B cell (primary cell): ENCODE measurements at regions of chr7 and their contacts with region 1.

Region 1: DNA sequence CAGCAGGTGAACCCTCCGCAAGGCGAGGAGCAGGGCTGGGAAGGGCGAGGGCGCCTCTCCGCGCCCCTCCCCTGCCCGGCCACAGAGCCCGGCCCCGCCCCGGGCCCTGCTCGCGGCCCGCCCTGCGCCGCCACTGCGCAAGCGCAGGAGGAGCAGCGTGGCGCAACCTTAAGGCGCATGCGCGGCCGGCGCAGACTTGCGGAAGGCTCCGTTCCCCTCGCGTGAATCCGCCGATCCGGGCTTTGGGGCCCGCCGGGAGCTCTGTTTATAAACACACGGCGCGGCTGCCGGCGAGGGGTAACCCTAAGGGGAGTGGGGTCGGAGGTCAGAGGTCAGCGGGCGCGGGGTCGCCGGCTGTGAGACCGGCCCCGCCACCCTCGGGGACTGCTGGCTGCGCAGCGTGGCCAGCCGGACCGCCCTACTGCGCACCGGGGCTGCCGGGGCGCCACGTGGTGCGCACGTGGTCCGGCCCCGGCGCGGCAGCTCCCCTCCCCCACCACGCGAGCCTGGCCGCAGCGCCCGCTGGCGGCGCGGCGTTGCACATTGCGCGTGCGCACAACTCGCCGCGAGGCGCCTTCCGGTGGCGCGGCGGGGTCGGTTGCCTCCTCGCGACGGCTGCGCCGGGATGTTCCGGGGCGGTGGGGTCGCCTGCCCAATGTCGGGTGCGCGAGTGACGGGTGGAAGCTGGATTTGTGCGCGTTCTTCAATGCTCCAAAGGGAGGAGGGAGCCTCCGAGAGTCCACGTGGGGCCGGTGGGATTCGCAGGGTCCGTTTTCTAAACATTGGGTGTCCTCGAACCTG is 40.2 kb upstream of the FOXK1 start:
- DNase-seq: peak; percentile 99
- ATAC-seq: peak; percentile 82
- H3K4me3 ChIP-seq: peak overlapping the region; percentile 57 to 83 (median 79)
- H3K4me3 Mint-ChIP-seq: peak overlapping the region; percentile 88
- H3K27ac ChIP-seq: peak overlapping the region; percentile 83 to 90
- H3K27ac Mint-ChIP-seq: peak overlapping the region; percentile 87
- H3K4me1 ChIP-seq: peaks cover 5 to 13% of the 10 kb centered on the region in 2 donors
- H3K4me1 Mint-ChIP-seq: peaks cover 11% of the 10 kb centered on the region
- H3K27me3 ChIP-seq: peaks cover 0 to 5% (median 0%) of the 10 kb centered on the region in 4 experiments
- H3K27me3 Mint-ChIP-seq: no peaks in the 10 kb centered on the region
- CTCF ChIP-seq: peak; percentile 44

Region 2: GRCh38 chr7:4610768-4611467 is 30.9 kb before region 1 on chr7:
- CTCF ChIA-PET with region 1: interaction called, 3 read pairs
- POLR2A ChIA-PET with region 1: no interaction called
- intact Hi-C with region 1: loop called (anchors 1 kb)
- DNase-seq: peak; percentile 75
- ATAC-seq: peak; percentile 83
- H3K4me3 ChIP-seq: no peak overlapping the region
- H3K4me3 Mint-ChIP-seq: no peak overlapping the region
- H3K27ac ChIP-seq: no peak overlapping the region
- H3K27ac Mint-ChIP-seq: no peak overlapping the region
- H3K4me1 ChIP-seq: peaks cover 10 to 13% of the 10 kb centered on the region in 2 donors
- H3K4me1 Mint-ChIP-seq: peaks cover 12% of the 10 kb centered on the region
- H3K27me3 ChIP-seq: peaks cover 0 to 3% (median 0%) of the 10 kb centered on the region in 4 experiments
- H3K27me3 Mint-ChIP-seq: peaks cover 26% of the 10 kb centered on the region
- CTCF ChIP-seq: peak; percentile 90

Region 3: DNA sequence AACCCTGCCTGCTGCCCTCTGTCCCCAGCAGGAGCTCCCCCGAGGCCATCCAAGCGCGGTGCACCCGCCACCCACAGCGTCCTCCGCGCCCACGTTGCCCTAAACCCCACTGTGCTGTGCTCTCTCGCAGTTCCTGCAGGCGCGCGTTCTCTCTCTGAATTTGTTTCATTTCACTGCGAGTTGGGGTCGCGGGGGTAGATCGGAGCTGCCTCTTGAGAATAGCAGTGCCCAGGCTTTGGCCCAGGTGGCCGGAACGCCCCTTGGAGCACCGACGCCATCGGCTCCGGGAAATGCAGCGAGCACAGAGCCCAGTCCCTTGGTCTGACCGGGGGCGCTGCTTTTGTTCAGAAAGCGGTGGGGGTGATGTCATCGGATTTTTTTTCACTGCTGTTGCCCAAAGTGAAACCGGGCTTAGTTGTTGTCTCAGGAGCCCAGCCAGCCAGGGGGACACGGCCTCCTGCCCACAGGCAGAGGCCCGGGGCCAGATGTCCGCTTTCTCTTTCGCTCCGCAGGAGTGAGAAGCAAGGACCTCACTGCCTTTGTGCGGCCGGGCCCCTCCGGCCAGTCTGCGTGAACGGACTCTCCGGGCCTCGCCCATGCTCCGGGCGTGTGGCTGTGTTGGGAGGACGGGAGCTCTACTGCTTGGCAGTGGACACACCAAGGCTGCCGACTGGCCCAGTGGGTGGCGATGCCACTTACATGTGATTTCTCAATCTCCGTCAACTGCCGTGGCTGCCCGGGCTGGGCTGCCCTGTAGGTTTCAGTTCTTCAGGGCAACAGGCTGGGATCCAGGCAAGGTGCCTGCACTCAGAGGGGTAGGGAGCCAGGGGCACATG is 83.4 kb after region 1 on chr7:
- CTCF ChIA-PET with region 1: interaction called, 3 read pairs
- POLR2A ChIA-PET with region 1: no interaction called
- intact Hi-C with region 1: loop called (anchors 1 kb)
- DNase-seq: peak; percentile 74
- ATAC-seq: peak; percentile 78
- H3K4me3 ChIP-seq: peak overlapping the region; percentile 32 to 84 (median 63)
- H3K4me3 Mint-ChIP-seq: peak overlapping the region; percentile 95
- H3K27ac ChIP-seq: peak overlapping the region; percentile 80 to 89
- H3K27ac Mint-ChIP-seq: peak overlapping the region; percentile 92
- H3K4me1 ChIP-seq: peaks cover 13 to 28% of the 10 kb centered on the region in 2 donors
- H3K4me1 Mint-ChIP-seq: peaks cover 45% of the 10 kb centered on the region
- H3K27me3 ChIP-seq: no peaks in the 10 kb centered on the region
- H3K27me3 Mint-ChIP-seq: no peaks in the 10 kb centered on the region
- CTCF ChIP-seq: no peak

Region 4: GRCh38 chr7:4775250-4775847 is 133.5 kb after region 1 on chr7 and contains the start of gene AP5Z1:
- CTCF ChIA-PET with region 1: interaction called, 7 read pairs
- POLR2A ChIA-PET with region 1: interaction called, 25 read pairs
- intact Hi-C with region 1: no loop called
- DNase-seq: peak; percentile 98
- ATAC-seq: peak; percentile 93
- H3K4me3 ChIP-seq: peak within 1 kb of the TSS; percentile 87 to 97 (median 95)
- H3K4me3 Mint-ChIP-seq: peak within 1 kb of the TSS; percentile 97
- H3K27ac ChIP-seq: peak within 1 kb of the TSS; percentile 94 to 95
- H3K27ac Mint-ChIP-seq: peak within 1 kb of the TSS; percentile 99
- H3K4me1 ChIP-seq: peaks cover 14 to 26% of the 10 kb centered on the region in 2 donors
- H3K4me1 Mint-ChIP-seq: peaks cover 39% of the 10 kb centered on the region
- H3K27me3 ChIP-seq: no peaks in the 10 kb centered on the region
- H3K27me3 Mint-ChIP-seq: no peaks in the 10 kb centered on the region
- CTCF ChIP-seq: no peak
- total RNA-seq, gene AP5Z1: 108 and 113 TPM in 2 replicates

Region 5: GRCh38 chr7:6505685-6506574 is 1864.1 kb after region 1 on chr7:
- CTCF ChIA-PET with region 1: no interaction called
- POLR2A ChIA-PET with region 1: interaction called, 17 read pairs
- intact Hi-C with region 1: no loop called
- DNase-seq: no peak
- ATAC-seq: no peak
- H3K4me3 ChIP-seq: no peak overlapping the region
- H3K4me3 Mint-ChIP-seq: peak overlapping the region; percentile 98
- H3K27ac ChIP-seq: no peak overlapping the region
- H3K27ac Mint-ChIP-seq: no peak overlapping the region
- H3K4me1 ChIP-seq: peaks cover 7 to 13% of the 10 kb centered on the region in 2 donors
- H3K4me1 Mint-ChIP-seq: peaks cover 5% of the 10 kb centered on the region
- H3K27me3 ChIP-seq: no peaks in the 10 kb centered on the region
- H3K27me3 Mint-ChIP-seq: no peaks in the 10 kb centered on the region
- CTCF ChIP-seq: no peak